Adrenal gland (tissue), 19 donors: ENCODE measurements at regions of chr2 and their contacts with region 1.

Region 1: GRCh38 chr2:70871398-70872211 is 36.0 kb upstream of the CD207 start:
- DNase-seq: peak; percentile 78 to 91 (median 87)
- H3K4me3 ChIP-seq: no peak overlapping the region
- H3K27ac ChIP-seq: no peak overlapping the region
- H3K4me1 ChIP-seq: peaks cover 4% of the 10 kb centered on the region in 2 donors
- H3K27me3 ChIP-seq: peaks cover 24% of the 10 kb centered on the region
- CTCF ChIP-seq: peak; percentile 88 to 92 (median 88)
- POLR2A ChIP-seq: no peak

Region 2: DNA sequence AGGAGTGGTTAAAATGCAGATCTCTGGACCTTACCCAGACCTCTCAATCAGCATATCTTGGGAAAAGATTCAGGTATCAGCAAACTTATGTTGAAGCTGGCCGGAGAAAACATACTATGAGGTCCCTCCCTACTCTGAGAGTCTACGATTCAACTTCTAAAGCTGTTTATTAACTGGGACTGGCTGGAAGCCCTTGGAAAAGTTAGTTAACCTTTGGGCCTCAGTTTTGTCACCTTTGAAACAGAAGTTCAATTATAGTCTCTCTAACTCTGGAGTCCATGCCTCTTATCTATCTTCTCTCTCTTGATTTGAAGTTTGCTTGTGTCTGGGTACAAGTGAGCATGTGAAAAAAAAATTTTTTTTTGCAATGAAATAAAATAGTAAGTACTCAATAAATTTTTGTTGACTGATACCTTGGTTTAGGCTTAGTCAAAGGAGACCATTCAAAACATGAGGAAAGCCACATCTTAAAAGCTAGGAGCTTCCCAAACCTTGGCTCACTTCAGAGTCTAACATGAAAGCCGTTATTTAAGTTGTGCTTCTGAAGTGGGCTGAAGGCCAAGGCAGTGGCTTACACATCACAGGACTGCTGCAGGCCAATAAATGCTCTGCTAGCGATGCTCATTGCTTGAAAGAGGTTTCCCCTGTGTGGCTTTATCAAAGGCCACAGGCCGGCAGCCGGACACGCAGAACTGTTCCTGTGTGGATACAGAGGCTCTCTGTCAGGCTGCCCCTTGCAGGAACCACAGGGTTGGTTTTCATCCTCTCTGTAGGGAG is 459.1 kb before region 1 on chr2:
- intact Hi-C with region 1: no loop called
- DNase-seq: no peak
- H3K4me3 ChIP-seq: no peak overlapping the region
- H3K27ac ChIP-seq: no peak overlapping the region
- H3K4me1 ChIP-seq: no peaks in the 10 kb centered on the region
- H3K27me3 ChIP-seq: no peaks in the 10 kb centered on the region
- CTCF ChIP-seq: no peak
- POLR2A ChIP-seq: no peak

Region 3: GRCh38 chr2:70919672-70920366 is 48.2 kb after region 1 on chr2:
- intact Hi-C with region 1: loop called in 1 of 2 experiments (anchors 2 kb)
- DNase-seq: peak; percentile 80 to 93 (median 87)
- H3K4me3 ChIP-seq: no peak overlapping the region
- H3K27ac ChIP-seq: no peak overlapping the region
- H3K4me1 ChIP-seq: no peaks in the 10 kb centered on the region
- H3K27me3 ChIP-seq: no peaks in the 10 kb centered on the region
- CTCF ChIP-seq: peak; percentile 86 to 94 (median 88)
- POLR2A ChIP-seq: no peak

Region 4: GRCh38 chr2:70948337-70949003 is 76.9 kb after region 1 on chr2:
- intact Hi-C with region 1: loop called in 1 of 2 experiments (anchors 5 kb)
- DNase-seq: peak; percentile 72 to 85 (median 81)
- H3K4me3 ChIP-seq: peak overlapping the region in 1 of 4 donors; percentile 41
- H3K27ac ChIP-seq: no peak overlapping the region
- H3K4me1 ChIP-seq: peaks cover 3 to 8% of the 10 kb centered on the region in 2 donors
- H3K27me3 ChIP-seq: peaks cover 5% of the 10 kb centered on the region
- CTCF ChIP-seq: peak; percentile 56 to 81 (median 76)
- POLR2A ChIP-seq: no peak